ENCODE measurements at regions of chr1 and their contacts with region 1.

Region 1: DNA sequence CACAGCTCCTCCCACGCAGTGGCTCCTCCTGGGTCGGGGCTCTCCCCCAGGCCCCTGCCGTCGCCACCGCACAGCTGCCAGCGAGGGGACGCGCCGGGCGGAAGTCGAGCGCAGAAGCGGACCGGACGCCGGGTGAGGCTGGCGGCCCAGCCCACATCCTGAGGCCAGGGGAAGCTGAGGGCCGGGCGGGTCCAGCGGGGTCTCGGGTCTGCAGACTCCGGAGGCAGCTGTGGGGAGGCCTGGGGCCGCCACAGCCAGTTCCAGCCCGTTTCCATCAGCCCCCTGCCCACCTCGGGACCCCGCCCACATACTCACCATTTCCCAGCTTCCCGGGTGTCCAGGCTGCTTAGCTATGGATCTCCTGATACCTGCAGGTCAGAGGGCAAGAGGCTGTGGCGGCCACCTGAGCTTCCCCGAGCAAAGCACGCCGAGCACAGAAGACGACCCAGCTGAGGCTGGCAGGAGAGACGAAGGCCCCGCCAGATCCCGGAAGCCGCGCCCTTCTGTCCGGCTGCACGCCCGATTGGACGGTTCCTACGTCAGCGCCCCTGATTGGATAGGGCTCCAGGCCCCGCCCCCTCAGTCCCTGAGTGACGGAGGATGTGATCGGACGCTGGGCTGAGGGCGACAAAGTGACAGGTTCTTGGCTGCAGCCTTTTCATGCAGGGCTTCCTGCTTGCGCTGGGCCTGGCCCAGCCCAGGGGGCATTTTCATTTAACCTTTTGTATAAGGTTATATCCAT is 38.7 kb upstream of the ZNF124 start:
- DNase-seq: peak; percentile 90 to 99
- H3K4me3 ChIP-seq: peak overlapping the region; percentile 73 to 93
- H3K27ac ChIP-seq: peak overlapping the region; percentile 89 to 90
- H3K4me1 ChIP-seq: peaks cover 4 to 14% of the 10 kb centered on the region in 2 donors
- H3K27me3 ChIP-seq: no peaks in the 10 kb centered on the region
- CTCF ChIP-seq: no peak

Region 2: GRCh38 chr1:247078261-247079140 is 132.0 kb before region 1 on chr1 and contains the start of gene ZNF670:
- intact Hi-C with region 1: loop called (anchors 1 kb)
- DNase-seq: peak; percentile 88 to 98
- H3K4me3 ChIP-seq: peak within 1 kb of the TSS; percentile 77 to 78
- H3K27ac ChIP-seq: peak within 1 kb of the TSS; percentile 71
- H3K4me1 ChIP-seq: peaks cover 0 to 10% of the 10 kb centered on the region in 2 donors
- H3K27me3 ChIP-seq: no peaks in the 10 kb centered on the region
- CTCF ChIP-seq: peak in 1 of 3 experiments; percentile 12
- total RNA-seq, gene ZNF670: not detected

Region 3: GRCh38 chr1:247103859-247104591 is 106.5 kb before region 1 on chr1 and contains the start of gene ZNF669:
- intact Hi-C with region 1: loop called (anchors 2 kb)
- DNase-seq: peak; percentile 92 to 99
- H3K4me3 ChIP-seq: peak within 1 kb of the TSS; percentile 63 to 75
- H3K27ac ChIP-seq: peak within 1 kb of the TSS; percentile 67 to 86
- H3K4me1 ChIP-seq: peaks cover 0 to 13% of the 10 kb centered on the region in 2 donors
- H3K27me3 ChIP-seq: no peaks in the 10 kb centered on the region
- CTCF ChIP-seq: peak in 1 of 3 experiments; percentile 10
- total RNA-seq, gene ZNF669: 0.64 TPM

Region 4: DNA sequence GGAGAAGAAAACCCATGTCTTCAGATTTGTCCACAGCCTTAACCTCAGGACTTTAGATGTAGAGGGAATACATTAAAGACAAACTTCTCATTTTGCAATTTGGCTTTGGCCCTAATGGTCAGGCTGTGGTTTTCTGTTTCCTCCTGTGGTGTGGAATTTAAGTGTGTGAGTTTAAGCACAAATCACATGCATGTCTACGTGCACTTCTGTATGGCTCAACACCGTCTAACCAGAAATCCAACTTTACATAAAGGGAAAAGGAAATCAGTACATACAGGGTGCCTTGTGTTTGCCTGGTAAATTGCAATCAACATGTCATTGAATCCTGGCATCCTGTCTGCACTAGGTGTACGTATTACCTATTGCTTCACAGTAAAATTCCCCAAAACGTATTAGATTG is 37.6 kb before region 1 on chr1:
- intact Hi-C with region 1: loop called (anchors 5 kb)
- DNase-seq: no peak
- H3K4me3 ChIP-seq: no peak overlapping the region
- H3K27ac ChIP-seq: no peak overlapping the region
- H3K4me1 ChIP-seq: no peaks in the 10 kb centered on the region
- H3K27me3 ChIP-seq: no peaks in the 10 kb centered on the region
- CTCF ChIP-seq: no peak

Region 5: DNA sequence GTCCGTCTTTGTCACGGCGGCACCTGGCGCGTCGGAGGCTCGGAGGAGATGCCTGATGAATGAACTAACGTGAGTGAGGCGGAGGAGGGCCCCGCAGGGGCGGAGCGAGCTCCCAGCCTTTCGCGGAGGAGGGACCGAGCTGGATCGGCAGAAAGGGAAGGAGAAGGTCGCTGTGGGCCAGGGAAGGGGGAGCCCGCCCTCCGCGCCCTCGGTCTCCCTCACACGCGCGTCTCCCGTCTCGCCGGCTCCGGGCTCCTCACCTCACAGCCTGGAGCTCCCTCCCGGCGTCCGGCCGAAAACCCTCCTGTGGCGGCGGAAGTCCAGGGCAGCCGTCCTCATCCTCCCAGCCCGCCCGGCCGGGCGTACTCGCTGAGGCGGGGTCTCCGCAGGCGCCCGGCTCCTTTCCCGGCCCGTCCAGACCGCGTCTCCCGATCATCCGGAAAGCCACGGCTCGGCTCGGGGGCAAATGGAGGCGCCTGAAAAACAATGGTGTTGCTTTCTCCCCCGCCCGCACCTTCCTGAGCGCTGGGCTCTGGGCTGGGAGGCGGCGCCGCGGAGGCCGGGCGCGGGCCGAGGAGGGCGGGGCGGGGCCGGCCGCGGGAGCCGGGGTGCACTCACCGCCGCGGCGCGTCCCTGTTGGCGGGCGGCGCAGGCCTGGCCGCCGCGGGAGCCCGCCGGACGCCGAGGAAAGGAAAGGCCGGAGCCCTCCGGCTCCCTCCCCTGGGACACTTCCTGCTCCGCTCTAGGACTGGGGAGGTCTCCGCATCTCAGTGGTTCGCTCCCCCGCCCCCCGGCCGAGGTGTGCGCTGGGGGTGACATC is 120.8 kb after region 1 on chr1 and contains the start of gene ZNF496:
- intact Hi-C with region 1: loop called (anchors 2 kb)
- DNase-seq: peak; percentile 35 to 87
- H3K4me3 ChIP-seq: peak within 1 kb of the TSS; percentile 91 to 100
- H3K27ac ChIP-seq: peak within 1 kb of the TSS; percentile 92 to 98
- H3K4me1 ChIP-seq: peaks cover 7% of the 10 kb centered on the region in 2 donors
- H3K27me3 ChIP-seq: no peaks in the 10 kb centered on the region
- CTCF ChIP-seq: no peak
- total RNA-seq, gene ZNF496: 38.5 TPM